Ascending aorta (tissue), 2 donors: ENCODE measurements at regions of chr5 and their contacts with region 1.

Region 1: DNA sequence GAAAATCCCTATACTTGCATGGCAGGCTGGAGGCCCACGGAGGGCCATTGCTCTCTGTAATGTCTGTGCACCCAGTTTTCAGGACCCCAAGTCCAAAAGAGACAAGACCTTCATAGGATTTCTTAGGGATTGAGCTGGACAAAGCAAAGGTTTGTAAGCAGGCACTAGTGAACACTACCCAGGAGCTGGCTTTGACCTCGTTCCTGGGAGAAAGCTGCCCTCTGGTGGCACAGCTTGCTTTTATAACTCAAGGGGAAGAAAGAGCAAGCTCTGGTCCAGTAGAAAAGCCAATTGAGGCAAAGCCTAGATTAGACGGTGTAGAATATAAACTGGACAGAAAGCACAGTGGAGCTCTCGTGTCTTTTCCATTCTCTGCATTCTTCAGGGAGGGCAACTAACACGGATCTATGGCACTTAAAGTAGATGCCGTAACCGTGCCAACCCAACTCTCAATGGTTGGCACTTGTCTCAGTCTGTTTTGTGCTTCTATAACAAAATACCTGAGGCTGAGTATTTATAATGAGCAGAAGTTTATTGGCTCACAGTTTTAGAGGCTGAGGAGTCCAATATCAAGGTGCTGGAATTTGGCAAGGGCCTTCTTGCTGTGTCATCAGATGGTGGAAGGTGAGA is 7.9 kb downstream of the GABRP start:
- DNase-seq: peak in 1 of 2 donors; percentile 69
- H3K4me3 ChIP-seq: no peak overlapping the region
- H3K27ac ChIP-seq: no peak overlapping the region
- H3K4me1 ChIP-seq: no peaks in the 10 kb centered on the region
- H3K27me3 ChIP-seq: no peaks in the 10 kb centered on the region
- CTCF ChIP-seq: peak; percentile 38 to 62 (median 57)

Region 2: GRCh38 chr5:170434966-170435605 is 356.4 kb before region 1 on chr5:
- intact Hi-C with region 1: loop called (anchors 5 kb)
- DNase-seq: peak in 1 of 2 donors; percentile 77
- H3K4me3 ChIP-seq: no peak overlapping the region
- H3K27ac ChIP-seq: no peak overlapping the region
- H3K4me1 ChIP-seq: no peaks in the 10 kb centered on the region
- H3K27me3 ChIP-seq: no peaks in the 10 kb centered on the region
- CTCF ChIP-seq: peak; percentile 83 to 96 (median 92)

Region 3: DNA sequence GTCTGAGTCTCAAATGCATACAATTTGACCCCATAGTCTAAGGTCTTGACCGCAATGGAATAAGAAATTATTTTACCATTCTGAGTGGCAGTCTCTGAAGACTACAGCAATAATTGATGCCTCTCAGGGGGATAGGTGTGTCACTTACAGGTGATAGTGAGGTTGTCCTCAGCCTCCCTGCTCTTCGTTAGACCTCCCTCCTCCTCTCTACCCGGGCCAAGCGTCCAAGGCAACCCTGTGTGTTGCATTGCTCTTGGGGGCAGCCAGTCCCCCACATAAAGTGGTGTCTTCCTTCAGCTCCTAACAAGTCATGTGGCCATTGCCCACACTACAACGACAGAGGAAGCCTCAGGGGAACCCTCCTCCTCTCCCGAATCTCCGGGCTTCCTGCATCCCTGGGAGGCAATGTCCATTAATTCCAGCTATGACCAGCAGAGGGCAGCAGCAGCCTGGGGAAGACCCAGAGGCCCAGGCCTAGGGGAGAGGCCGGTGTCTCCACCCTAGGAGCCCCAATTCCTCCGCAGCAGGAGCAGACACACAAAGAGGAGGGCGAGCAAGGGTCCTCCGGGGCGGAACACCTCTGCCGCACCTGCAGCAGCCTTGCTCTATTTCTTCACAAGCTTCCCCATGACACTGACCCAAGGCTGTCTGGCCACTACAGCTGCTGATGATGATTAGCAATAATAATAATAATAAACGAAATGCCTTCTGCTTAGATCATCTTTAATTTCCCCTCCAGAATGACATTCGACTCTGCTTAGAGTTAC is 152.8 kb before region 1 on chr5:
- intact Hi-C with region 1: loop called (anchors 5 kb)
- DNase-seq: peak in 1 of 2 donors; percentile 82
- H3K4me3 ChIP-seq: no peak overlapping the region
- H3K27ac ChIP-seq: no peak overlapping the region
- H3K4me1 ChIP-seq: peaks cover 0 to 12% of the 10 kb centered on the region in 2 donors
- H3K27me3 ChIP-seq: no peaks in the 10 kb centered on the region
- CTCF ChIP-seq: peak; percentile 56 to 83 (median 81)

Region 4: GRCh38 chr5:170747851-170748250 is 43.6 kb before region 1 on chr5:
- intact Hi-C with region 1: loop called (anchors 1 kb)
- DNase-seq: peak in 1 of 2 donors; percentile 57
- H3K4me3 ChIP-seq: no peak overlapping the region
- H3K27ac ChIP-seq: no peak overlapping the region
- H3K4me1 ChIP-seq: peaks cover 0 to 6% of the 10 kb centered on the region in 2 donors
- H3K27me3 ChIP-seq: no peaks in the 10 kb centered on the region
- CTCF ChIP-seq: no peak